ENCODE measurements at regions of chr6 and their contacts with region 1.

Region 1: GRCh38 chr6:2841264-2842138 is at the start of gene SERPINB1:
- DNase-seq: peak; percentile 87
- H3K4me3 Mint-ChIP-seq: peak within 1 kb of the TSS; percentile 91
- H3K27ac Mint-ChIP-seq: peak within 1 kb of the TSS; percentile 99
- H3K4me1 Mint-ChIP-seq: peaks cover 15% of the 10 kb centered on the region
- H3K27me3 Mint-ChIP-seq: no peaks in the 10 kb centered on the region
- CTCF ChIP-seq: no peak
- total RNA-seq, gene SERPINB1: 56.3 and 78.5 TPM in 2 replicates

Region 2: DNA sequence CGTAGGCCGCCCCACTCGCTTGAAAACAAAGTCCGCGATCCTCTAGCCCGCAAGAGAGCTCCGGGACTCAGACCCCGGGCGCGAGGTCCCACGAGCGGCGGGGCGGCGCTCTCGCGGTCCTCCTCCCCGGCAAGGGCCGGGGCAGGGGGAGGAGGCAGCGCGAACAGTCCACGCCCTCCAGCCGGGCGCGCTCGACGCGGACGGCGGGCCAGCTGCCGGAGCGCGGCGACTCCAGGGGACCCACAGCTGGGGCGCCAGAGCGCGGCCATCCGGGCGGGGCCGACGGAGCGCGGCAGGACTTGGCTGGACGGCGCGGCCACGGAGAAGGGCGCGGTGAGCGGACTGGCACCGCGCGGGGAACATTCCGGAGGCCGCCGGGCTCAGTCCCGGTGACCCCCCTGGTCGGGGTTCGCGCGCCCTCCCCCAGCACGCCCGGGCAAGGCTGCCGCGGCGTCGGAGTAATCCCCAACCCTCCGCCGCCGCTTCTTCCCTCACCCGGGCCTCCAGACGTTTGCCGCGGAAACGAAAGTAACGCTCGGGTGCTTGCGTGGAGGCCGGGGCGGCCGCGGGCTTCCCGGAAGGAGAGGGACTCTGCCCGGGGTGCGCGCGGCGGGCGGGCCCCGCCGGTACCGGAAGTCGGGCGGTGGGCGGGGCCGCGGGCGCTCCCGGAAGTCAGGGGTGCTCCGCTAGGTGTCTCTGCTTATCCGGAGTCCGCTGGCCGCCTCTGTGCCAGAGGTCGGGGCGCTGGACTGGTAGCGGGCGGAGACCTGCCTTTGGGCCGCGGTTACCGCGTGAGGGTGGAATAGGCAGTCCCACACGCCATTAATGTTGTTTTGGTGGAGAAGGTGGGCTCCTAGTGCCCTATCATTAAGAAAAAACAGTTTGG is 227.1 kb after region 1 on chr6 and contains the start of gene RIPK1:
- CTCF ChIA-PET with region 1: interaction called, 3 read pairs
- intact Hi-C with region 1: loop called (anchors 10 kb)
- DNase-seq: peak; percentile 93
- H3K4me3 Mint-ChIP-seq: peak within 1 kb of the TSS; percentile 89
- H3K27ac Mint-ChIP-seq: peak within 1 kb of the TSS; percentile 64
- H3K4me1 Mint-ChIP-seq: no peaks in the 10 kb centered on the region
- H3K27me3 Mint-ChIP-seq: no peaks in the 10 kb centered on the region
- CTCF ChIP-seq: no peak
- total RNA-seq, gene RIPK1: 11.5 and 11.6 TPM in 2 replicates